ENCODE measurements at regions of chr1 and their contacts with region 1.

Region 1: GRCh38 chr1:45303582-45304310 is 22.9 kb upstream of the HPDL start:
- DNase-seq: peak; percentile 100
- ATAC-seq: peak; percentile 83
- H3K4me3 Mint-ChIP-seq: peak overlapping the region; percentile 84
- H3K27ac Mint-ChIP-seq: peak overlapping the region; percentile 95
- H3K4me1 Mint-ChIP-seq: peaks cover 44% of the 10 kb centered on the region
- H3K27me3 Mint-ChIP-seq: no peaks in the 10 kb centered on the region

Region 2: GRCh38 chr1:44674113-44675000 is 629.4 kb before region 1 on chr1 and contains the starts of genes ARMH1 and TMEM53:
- CTCF ChIA-PET with region 1: no interaction called
- POLR2A ChIA-PET with region 1: no interaction called
- intact Hi-C with region 1: loop called in 1 of 2 experiments (anchors 1 kb)
- DNase-seq: peak; percentile 99
- ATAC-seq: peak; percentile 97
- H3K4me3 Mint-ChIP-seq: peak within 1 kb of the TSS; percentile 78
- H3K27ac Mint-ChIP-seq: peak within 1 kb of the TSS; percentile 84
- H3K4me1 Mint-ChIP-seq: peaks cover 24% of the 10 kb centered on the region
- H3K27me3 Mint-ChIP-seq: no peaks in the 10 kb centered on the region
- total RNA-seq, gene ARMH1: 67.3 to 75.1 TPM
- total RNA-seq, gene TMEM53: 4.3 to 5.5 TPM

Region 3: GRCh38 chr1:44799770-44800584 is 503.8 kb before region 1 on chr1 and contains the start of gene PLK3:
- CTCF ChIA-PET with region 1: no interaction called
- POLR2A ChIA-PET with region 1: interaction called, 9 read pairs
- intact Hi-C with region 1: loop called (anchors 2 to 10 kb)
- DNase-seq: peak; percentile 99
- ATAC-seq: peak; percentile 84
- H3K4me3 Mint-ChIP-seq: peak within 1 kb of the TSS; percentile 87
- H3K27ac Mint-ChIP-seq: peak within 1 kb of the TSS; percentile 100
- H3K4me1 Mint-ChIP-seq: peaks cover 41% of the 10 kb centered on the region
- H3K27me3 Mint-ChIP-seq: no peaks in the 10 kb centered on the region
- total RNA-seq, gene PLK3: 52.1 to 52.7 TPM

Region 4: GRCh38 chr1:44985747-44986359 is 317.9 kb before region 1 on chr1:
- CTCF ChIA-PET with region 1: no interaction called
- POLR2A ChIA-PET with region 1: interaction called, 5 read pairs
- intact Hi-C with region 1: loop called in 1 of 2 experiments (anchors 1 kb)
- DNase-seq: no peak
- ATAC-seq: no peak
- H3K4me3 Mint-ChIP-seq: peak overlapping the region; percentile 96
- H3K27ac Mint-ChIP-seq: peak overlapping the region; percentile 87
- H3K4me1 Mint-ChIP-seq: peaks cover 22% of the 10 kb centered on the region
- H3K27me3 Mint-ChIP-seq: no peaks in the 10 kb centered on the region

Region 5: DNA sequence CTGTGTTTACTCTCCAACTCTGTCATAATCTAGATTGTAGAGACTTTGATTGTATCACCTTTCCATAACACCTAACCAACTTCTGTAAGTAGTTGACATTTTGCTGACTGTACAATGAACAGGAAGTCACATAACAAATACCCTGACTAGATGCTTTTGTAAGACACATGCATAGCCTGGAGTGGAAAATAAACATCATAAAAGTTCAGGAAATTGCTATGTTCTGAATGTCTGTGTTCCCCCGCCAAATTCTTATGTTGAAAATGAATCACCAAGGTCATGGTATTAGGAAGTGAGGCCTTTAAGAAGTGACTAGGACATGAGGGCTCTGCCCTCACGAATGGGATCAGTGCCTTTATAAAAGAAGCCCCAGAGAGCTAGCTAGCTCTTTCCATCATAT is 57.0 kb before region 1 on chr1:
- CTCF ChIA-PET with region 1: interaction called, 3 read pairs
- POLR2A ChIA-PET with region 1: interaction called, 3 read pairs
- intact Hi-C with region 1: loop called in 1 of 2 experiments (anchors 1 kb)
- DNase-seq: peak; percentile 24
- ATAC-seq: peak; percentile 92
- H3K4me3 Mint-ChIP-seq: no peak overlapping the region
- H3K27ac Mint-ChIP-seq: peak overlapping the region; percentile 93
- H3K4me1 Mint-ChIP-seq: peaks cover 18% of the 10 kb centered on the region
- H3K27me3 Mint-ChIP-seq: peaks cover 4% of the 10 kb centered on the region

Region 6: GRCh38 chr1:45393718-45394302 is 90.1 kb after region 1 on chr1:
- CTCF ChIA-PET with region 1: no interaction called
- POLR2A ChIA-PET with region 1: no interaction called
- intact Hi-C with region 1: no loop called
- DNase-seq: peak; percentile 35
- ATAC-seq: peak; percentile 86
- H3K4me3 Mint-ChIP-seq: no peak overlapping the region
- H3K27ac Mint-ChIP-seq: peak overlapping the region; percentile 69
- H3K4me1 Mint-ChIP-seq: peaks cover 16% of the 10 kb centered on the region
- H3K27me3 Mint-ChIP-seq: no peaks in the 10 kb centered on the region

Region 7: GRCh38 chr1:45490626-45491486 is 187.1 kb after region 1 on chr1 and contains the start of gene TESK2:
- CTCF ChIA-PET with region 1: interaction called, 4 read pairs
- POLR2A ChIA-PET with region 1: interaction called, 3 read pairs
- intact Hi-C with region 1: loop called (anchors 1 kb)
- DNase-seq: peak; percentile 97
- ATAC-seq: peak; percentile 94
- H3K4me3 Mint-ChIP-seq: no peak within 1 kb of the TSS
- H3K27ac Mint-ChIP-seq: no peak within 1 kb of the TSS
- H3K4me1 Mint-ChIP-seq: peaks cover 4% of the 10 kb centered on the region
- H3K27me3 Mint-ChIP-seq: no peaks in the 10 kb centered on the region
- total RNA-seq, gene TESK2: 3.1 to 3.3 TPM